Mammary epithelial cell (primary cell): ENCODE measurements at regions of chr14 and their contacts with region 1.

Region 1: DNA sequence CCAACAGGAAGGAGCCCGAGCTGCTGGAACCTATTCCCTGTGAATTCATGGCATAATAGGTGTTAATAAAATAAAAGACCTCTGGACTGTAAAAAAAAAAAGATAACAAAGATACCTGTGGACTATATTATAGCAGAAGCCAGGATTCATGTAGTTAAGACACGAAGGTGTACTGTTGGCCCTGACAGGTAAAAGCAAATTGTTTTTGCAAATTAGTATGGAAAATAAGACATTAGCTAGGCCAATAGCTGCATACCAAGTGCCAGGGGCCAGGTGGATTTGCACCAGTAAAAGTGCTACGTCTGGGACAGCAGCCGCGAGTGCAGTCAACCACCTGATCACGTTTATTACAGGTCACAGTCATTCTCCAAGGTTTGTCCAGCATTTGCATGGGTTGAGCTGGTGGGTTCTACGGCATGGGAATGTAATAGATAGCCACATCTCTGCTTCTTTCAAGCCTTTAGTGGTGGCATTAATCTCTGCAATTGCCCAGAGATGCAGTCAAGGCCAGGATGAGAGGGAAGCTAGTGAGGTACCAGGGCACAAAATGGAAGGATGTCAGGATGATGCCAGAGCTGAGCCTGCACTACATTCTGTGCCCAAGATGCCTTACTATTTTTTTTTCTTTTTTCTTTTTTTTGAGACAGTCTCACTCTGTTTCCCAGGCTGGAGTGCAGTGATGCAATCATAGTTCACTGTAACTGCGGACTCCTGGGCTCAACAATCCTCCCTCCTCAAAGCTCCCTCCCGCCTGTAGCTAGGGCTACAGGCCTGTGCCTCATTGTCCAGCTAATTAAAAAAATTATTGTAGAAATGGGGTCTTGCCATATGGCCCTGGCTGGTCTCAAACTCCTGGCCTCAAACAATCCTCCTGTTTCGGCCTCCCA is 26.3 kb downstream of the TNFAIP2 start:
- DNase-seq: no peak
- H3K4me3 ChIP-seq: no peak overlapping the region
- H3K27ac ChIP-seq: no peak overlapping the region
- H3K4me1 ChIP-seq: peaks cover 6% of the 10 kb centered on the region
- H3K27me3 ChIP-seq: peaks cover 2% of the 10 kb centered on the region
- CTCF ChIP-seq: no peak

Region 2: DNA sequence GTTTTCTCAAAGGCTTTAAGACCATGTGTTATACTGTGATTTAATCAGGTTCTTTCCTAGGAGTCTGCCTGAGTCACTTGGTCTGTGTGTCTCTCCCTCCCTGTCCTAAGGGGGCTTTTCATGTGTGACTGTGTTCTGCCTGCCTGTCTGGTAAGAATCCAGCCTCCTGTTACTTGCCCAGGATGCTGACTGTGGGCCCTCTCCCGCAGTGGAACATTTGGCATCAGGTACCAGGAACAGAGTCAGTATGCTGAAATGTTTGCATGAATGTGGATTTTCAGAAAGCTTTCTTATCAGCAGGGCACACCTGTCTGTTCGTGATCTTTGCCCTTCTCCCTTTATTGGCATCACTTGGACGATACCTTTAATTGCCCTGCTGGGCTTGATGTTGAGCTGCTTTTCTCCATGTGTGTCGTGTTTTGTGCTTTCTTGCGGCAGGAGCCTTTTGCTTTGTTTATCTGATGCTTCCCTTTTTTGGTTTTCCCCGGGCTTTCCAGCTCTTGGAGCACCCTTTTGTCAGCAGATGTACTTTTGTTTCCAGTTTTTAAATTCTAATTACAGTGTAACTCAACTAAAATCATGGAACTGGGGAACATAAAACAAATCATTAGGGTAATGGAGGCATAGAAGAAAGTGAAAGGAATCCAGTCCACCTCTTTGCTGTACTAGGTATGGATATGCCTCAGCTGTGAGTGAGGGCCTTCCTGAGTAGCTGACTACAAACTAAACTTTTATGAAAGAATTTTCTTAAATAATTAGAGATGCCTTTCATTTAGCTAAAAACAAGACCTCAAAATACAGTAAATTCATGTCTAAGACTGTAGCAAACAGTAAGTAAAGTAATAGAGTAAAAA is 299.8 kb before region 1 on chr14:
- CTCF ChIA-PET with region 1: interaction called, 15 read pairs
- dilution Hi-C with region 1: no loop called
- in situ Hi-C with region 1: no loop called
- intact Hi-C with region 1: no loop called
- DNase-seq: peak; percentile 30
- H3K4me3 ChIP-seq: no peak overlapping the region
- H3K27ac ChIP-seq: no peak overlapping the region
- H3K4me1 ChIP-seq: no peaks in the 10 kb centered on the region
- H3K27me3 ChIP-seq: no peaks in the 10 kb centered on the region
- CTCF ChIP-seq: no peak

Region 3: GRCh38 chr14:103391048-103391447 is 241.5 kb after region 1 on chr14:
- CTCF ChIA-PET with region 1: no interaction called
- dilution Hi-C with region 1: no loop called
- in situ Hi-C with region 1: no loop called
- intact Hi-C with region 1: no loop called
- DNase-seq: peak; percentile 51
- H3K4me3 ChIP-seq: no peak overlapping the region
- H3K27ac ChIP-seq: no peak overlapping the region
- H3K4me1 ChIP-seq: peaks cover 25% of the 10 kb centered on the region
- H3K27me3 ChIP-seq: no peaks in the 10 kb centered on the region
- CTCF ChIP-seq: peak; percentile 70 to 74